ENCODE measurements at regions of chr13 and their contacts with region 1.

Region 1: GRCh38 chr13:73089213-73089612 is 30.4 kb downstream of the KLF5 start:
- DNase-seq: no peak
- ATAC-seq: no peak
- H3K4me3 ChIP-seq: no peak overlapping the region
- H3K4me3 Mint-ChIP-seq: no peak overlapping the region
- H3K27ac ChIP-seq: no peak overlapping the region
- H3K27ac Mint-ChIP-seq: no peak overlapping the region
- H3K4me1 ChIP-seq: peaks cover 8% of the 10 kb centered on the region
- H3K4me1 Mint-ChIP-seq: peaks cover 20% of the 10 kb centered on the region
- H3K27me3 ChIP-seq: no peaks in the 10 kb centered on the region
- H3K27me3 Mint-ChIP-seq: no peaks in the 10 kb centered on the region
- CTCF ChIP-seq: no peak

Region 2: GRCh38 chr13:74586847-74587246 is 1497.6 kb after region 1 on chr13:
- CTCF ChIA-PET with region 1: no interaction called
- POLR2A ChIA-PET with region 1: no interaction called
- intact Hi-C with region 1: loop called in 1 of 2 experiments (anchors 5 kb)
- DNase-seq: no peak
- ATAC-seq: no peak
- H3K4me3 ChIP-seq: no peak overlapping the region
- H3K4me3 Mint-ChIP-seq: no peak overlapping the region
- H3K27ac ChIP-seq: no peak overlapping the region
- H3K27ac Mint-ChIP-seq: no peak overlapping the region
- H3K4me1 ChIP-seq: no peaks in the 10 kb centered on the region
- H3K4me1 Mint-ChIP-seq: no peaks in the 10 kb centered on the region
- H3K27me3 ChIP-seq: peaks cover 0 to 3% of the 10 kb centered on the region in 2 experiments
- H3K27me3 Mint-ChIP-seq: peaks cover 10% of the 10 kb centered on the region
- CTCF ChIP-seq: no peak